ENCODE measurements at regions of chr11 and their contacts with region 1.

Region 1: DNA sequence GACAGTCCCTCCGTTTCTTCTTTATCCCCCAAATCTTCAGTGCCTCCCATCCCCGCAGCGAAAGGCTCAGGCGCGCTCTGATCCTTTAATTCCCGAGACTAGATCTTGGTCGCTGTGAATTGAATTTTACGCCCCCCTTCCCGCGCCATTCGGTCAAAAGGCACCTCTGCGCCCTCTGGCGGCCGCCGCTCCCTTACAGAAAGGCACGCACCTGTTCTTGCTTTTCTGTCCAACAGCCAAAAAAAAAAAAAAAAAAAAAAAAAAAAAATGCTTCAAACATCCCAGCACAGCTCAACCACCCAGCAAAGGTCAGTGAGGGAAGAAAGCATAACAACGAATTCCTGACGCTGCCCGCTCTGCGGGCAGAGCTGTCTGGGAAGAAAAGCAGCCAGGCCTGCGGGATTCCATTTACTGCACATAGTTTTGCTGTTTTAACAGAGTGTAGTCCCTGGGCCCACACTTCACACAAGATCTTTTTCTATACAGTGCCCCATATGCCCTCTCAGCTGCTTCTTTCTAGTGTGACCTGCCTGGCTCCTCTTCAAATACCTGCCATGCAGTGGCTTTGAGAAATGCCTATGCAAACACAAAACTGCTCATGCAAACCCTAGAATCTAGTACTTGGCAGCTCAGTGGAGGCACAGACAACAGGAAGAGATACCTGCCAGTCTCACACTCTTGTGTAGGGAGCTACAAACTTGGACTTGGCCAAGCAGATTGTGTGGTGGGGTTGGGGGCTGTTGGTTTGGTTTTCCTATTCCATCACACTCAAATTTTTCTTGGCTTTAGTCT is 1.3 kb upstream of the ESAM start:
- DNase-seq: peak; percentile 90
- ATAC-seq: peak; percentile 63
- H3K4me3 ChIP-seq: peak overlapping the region; percentile 91
- H3K27ac ChIP-seq: no peak overlapping the region
- H3K4me1 ChIP-seq: peaks cover 22% of the 10 kb centered on the region
- H3K27me3 ChIP-seq: no peaks in the 10 kb centered on the region
- CTCF ChIP-seq: peak; percentile 89

Region 2: DNA sequence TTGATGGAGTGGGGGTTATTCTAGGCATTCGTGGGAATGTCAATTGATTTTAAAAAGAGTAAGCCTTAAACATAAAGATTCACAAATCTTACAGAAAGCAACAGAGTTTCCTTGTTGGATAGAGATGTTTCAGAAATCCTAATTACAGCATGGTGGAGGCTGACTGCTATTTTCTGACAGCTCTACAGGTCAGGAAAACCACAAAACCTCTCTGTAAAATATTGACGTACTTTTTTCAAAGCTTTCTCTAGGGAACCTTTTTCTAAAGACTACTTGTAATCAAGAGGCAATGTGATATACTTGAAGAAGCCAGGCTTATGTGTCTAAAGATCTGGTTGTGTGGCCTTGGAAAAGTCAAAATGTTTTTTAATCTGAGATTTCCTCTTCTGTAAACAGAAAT is 308.8 kb before region 1 on chr11:
- CTCF ChIA-PET with region 1: interaction called, 12 read pairs
- POLR2A ChIA-PET with region 1: no interaction called
- intact Hi-C with region 1: no loop called
- DNase-seq: no peak
- ATAC-seq: no peak
- H3K4me3 ChIP-seq: no peak overlapping the region
- H3K27ac ChIP-seq: no peak overlapping the region
- H3K4me1 ChIP-seq: no peaks in the 10 kb centered on the region
- H3K27me3 ChIP-seq: peaks cover 62% of the 10 kb centered on the region
- CTCF ChIP-seq: no peak

Region 3: DNA sequence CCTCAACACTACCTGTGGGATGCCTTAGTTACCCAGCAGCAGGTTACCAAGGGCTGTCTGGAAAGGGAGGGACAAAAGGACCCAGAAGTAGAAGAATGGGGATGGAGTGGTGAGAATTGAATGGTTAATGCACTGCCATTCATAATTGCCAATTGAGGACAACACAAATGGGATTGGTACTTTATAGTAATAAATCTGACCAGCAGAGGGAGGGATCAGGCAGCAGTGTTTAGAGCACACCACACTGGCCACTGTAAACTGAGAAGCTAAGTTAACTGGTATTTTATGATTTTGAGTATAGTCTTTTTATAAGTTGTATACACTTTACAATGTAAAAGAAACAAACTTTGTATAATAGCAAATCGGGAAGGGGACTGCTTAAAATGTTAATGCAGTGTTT is 130.0 kb before region 1 on chr11:
- CTCF ChIA-PET with region 1: interaction called, 12 read pairs
- POLR2A ChIA-PET with region 1: no interaction called
- intact Hi-C with region 1: no loop called
- DNase-seq: peak; percentile 52
- ATAC-seq: peak; percentile 97
- H3K4me3 ChIP-seq: no peak overlapping the region
- H3K27ac ChIP-seq: no peak overlapping the region
- H3K4me1 ChIP-seq: no peaks in the 10 kb centered on the region
- H3K27me3 ChIP-seq: no peaks in the 10 kb centered on the region
- CTCF ChIP-seq: peak; percentile 68

Region 4: DNA sequence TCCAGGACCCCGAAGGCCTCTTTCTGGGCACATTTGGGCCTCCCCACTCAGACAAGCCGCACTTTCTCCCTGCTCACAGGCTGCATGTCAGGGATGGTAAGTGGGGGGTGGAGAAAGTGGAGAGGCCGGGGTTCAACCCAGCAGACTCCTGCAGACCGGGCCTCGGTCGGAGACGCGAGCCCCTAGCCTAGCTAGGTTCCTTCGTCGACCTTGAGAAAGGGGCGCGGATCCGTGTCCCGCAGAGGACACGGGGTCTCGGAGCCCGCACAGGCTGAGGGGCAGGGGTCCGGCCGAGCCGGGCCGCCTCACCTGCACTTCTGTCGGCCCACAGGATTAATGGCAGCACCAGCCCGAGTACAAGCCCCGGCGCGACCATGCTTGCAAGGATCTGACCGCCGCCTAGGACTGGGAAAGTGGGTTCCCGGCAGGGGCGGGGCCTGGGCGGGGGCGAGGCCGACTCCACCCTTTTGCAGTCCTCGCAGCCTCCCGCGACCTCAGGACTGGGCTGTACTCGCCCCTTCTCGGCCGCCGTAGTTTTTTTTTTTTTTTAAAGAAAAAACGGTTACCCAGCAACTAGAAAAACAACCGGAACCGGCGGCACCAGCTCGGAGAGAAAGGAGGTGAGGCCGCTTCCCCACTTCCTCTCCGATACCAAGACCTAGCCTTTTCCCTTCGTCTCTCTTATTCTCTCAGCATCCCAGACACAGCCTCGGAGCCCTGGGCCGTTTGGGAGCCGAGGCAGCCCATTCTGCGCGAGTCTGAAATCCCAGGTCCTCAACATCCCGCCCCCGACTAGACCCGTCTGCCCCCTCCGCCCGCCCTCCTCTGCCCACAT is 89.8 kb before region 1 on chr11 and contains the starts of genes SIAE and SPA17:
- CTCF ChIA-PET with region 1: interaction called, 15 read pairs
- POLR2A ChIA-PET with region 1: no interaction called
- intact Hi-C with region 1: loop called (anchors 1 kb)
- DNase-seq: peak; percentile 94
- ATAC-seq: peak; percentile 94
- H3K4me3 ChIP-seq: peak within 1 kb of the TSS; percentile 91
- H3K27ac ChIP-seq: peak within 1 kb of the TSS; percentile 46
- H3K4me1 ChIP-seq: peaks cover 16% of the 10 kb centered on the region
- H3K27me3 ChIP-seq: no peaks in the 10 kb centered on the region
- CTCF ChIP-seq: no peak
- total RNA-seq, gene SIAE: 12.8 and 17.6 TPM in 2 replicates
- total RNA-seq, gene SPA17: 14.0 and 16.5 TPM in 2 replicates

Region 5: GRCh38 chr11:124746621-124747243 is 16.6 kb before region 1 on chr11:
- CTCF ChIA-PET with region 1: interaction called, 13 read pairs
- POLR2A ChIA-PET with region 1: no interaction called
- intact Hi-C with region 1: loop called (anchors 2 kb)
- DNase-seq: peak; percentile 79
- ATAC-seq: peak; percentile 83
- H3K4me3 ChIP-seq: peak overlapping the region; percentile 67
- H3K27ac ChIP-seq: no peak overlapping the region
- H3K4me1 ChIP-seq: peaks cover 36% of the 10 kb centered on the region
- H3K27me3 ChIP-seq: no peaks in the 10 kb centered on the region
- CTCF ChIP-seq: peak; percentile 74

Region 6: GRCh38 chr11:124793466-124794278 is 30.3 kb after region 1 on chr11:
- CTCF ChIA-PET with region 1: interaction called, 21 read pairs
- POLR2A ChIA-PET with region 1: no interaction called
- intact Hi-C with region 1: loop called (anchors 1 kb)
- DNase-seq: peak; percentile 82
- ATAC-seq: peak; percentile 65
- H3K4me3 ChIP-seq: no peak overlapping the region
- H3K27ac ChIP-seq: no peak overlapping the region
- H3K4me1 ChIP-seq: peaks cover 42% of the 10 kb centered on the region
- H3K27me3 ChIP-seq: no peaks in the 10 kb centered on the region
- CTCF ChIP-seq: peak; percentile 88

Region 7: DNA sequence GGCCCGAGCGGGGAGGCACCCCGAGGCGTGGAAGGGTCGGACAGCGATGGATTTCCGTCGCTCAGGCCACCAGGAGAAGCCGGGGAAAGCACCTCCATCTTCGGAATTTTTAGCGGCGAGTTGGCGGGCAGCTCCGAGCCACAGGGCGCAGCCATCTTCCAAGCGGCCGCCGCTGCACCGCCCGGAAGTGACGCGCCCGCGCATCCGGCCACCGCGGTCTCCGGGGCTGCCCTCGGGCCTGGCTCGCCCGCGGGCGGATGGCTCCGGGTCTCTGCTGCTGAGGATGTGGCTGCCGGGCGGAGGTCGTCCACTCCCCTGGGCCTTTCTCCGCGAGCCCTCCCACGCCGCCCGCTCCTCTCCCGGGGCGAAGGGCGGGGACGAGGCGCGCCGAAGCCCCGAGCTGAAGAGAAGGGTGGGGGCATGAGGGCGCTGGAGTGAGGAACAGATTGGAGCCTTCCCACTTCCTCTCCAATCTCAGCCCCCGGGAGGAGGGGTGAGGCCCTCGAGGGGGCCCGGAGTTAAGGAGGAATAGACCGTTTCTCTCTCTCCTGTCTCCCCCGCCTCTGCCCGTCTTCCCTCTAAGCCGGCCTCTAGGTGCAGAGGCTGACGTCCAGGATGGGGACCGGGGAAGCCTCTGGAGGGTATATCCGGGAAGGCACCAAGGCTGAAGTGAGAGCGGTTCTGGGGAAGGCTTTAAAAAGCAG is 37.0 kb after region 1 on chr11 and contains the start of gene MSANTD2:
- CTCF ChIA-PET with region 1: interaction called, 12 read pairs
- POLR2A ChIA-PET with region 1: no interaction called
- intact Hi-C with region 1: no loop called
- DNase-seq: peak; percentile 76
- ATAC-seq: peak; percentile 77
- H3K4me3 ChIP-seq: peak within 1 kb of the TSS; percentile 70
- H3K27ac ChIP-seq: peak within 1 kb of the TSS; percentile 83
- H3K4me1 ChIP-seq: peaks cover 39% of the 10 kb centered on the region
- H3K27me3 ChIP-seq: no peaks in the 10 kb centered on the region
- CTCF ChIP-seq: no peak
- total RNA-seq, gene MSANTD2: 29.5 and 32.6 TPM in 2 replicates